ENCODE measurements at regions of chr18 and their contacts with region 1.

Region 1: DNA sequence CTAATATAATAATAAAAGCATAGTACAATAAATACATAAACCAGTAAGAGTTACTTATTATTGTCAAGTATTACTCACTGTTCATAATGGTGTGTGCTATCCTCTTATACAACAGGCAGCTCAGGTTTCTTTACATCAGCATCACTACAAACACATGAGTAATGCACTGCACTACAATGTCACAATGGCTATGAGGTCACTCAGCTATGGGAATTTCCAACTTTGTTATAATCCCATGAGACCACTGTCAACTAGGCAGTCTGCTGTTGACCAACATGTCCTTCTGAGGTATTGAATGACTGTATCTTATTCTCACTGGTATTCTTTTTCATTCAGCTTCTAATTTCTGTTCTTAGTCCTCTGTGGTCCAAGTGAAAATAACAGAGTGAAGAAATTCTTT is 250.4 kb upstream of the DSEL start:
- DNase-seq: peak; percentile 37
- H3K4me3 ChIP-seq: no peak overlapping the region
- H3K27ac ChIP-seq: no peak overlapping the region
- H3K4me1 ChIP-seq: peaks cover 24% of the 10 kb centered on the region
- H3K27me3 ChIP-seq: no peaks in the 10 kb centered on the region
- CTCF ChIP-seq: no peak

Region 2: GRCh38 chr18:67783196-67783946 is 16.4 kb after region 1 on chr18:
- CTCF ChIA-PET with region 1: no interaction called
- POLR2A ChIA-PET with region 1: no interaction called
- intact Hi-C with region 1: loop called (anchors 2 kb)
- DNase-seq: peak; percentile 78
- H3K4me3 ChIP-seq: no peak overlapping the region
- H3K27ac ChIP-seq: peak overlapping the region; percentile 55
- H3K4me1 ChIP-seq: peaks cover 19% of the 10 kb centered on the region
- H3K27me3 ChIP-seq: no peaks in the 10 kb centered on the region
- CTCF ChIP-seq: no peak